ENCODE measurements at regions of chr6 and their contacts with region 1.

Region 1: DNA sequence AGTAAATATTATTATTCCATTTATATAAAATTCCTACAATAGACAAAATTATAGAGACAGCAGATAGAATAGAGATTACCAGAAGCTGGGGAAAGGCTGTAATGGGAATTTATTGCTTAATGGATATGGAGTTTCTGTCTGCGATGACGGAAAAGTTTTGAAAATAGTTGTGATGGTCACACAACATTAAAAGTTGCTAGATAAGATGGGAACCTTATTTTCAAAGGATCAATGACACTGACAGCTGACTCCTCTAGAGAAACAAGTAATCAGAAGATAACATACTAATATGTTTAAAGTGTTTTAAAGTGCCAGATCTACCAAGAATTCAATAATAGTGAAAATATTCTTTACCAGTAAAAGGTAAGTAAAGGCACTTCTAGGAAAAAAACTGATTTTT is 236.3 kb downstream of the HIVEP2 start:
- DNase-seq: no peak
- H3K4me3 Mint-ChIP-seq: no peak overlapping the region
- H3K27ac Mint-ChIP-seq: no peak overlapping the region
- H3K4me1 Mint-ChIP-seq: peaks cover 19% of the 10 kb centered on the region
- H3K27me3 Mint-ChIP-seq: no peaks in the 10 kb centered on the region

Region 2: GRCh38 chr6:142518115-142518514 is 190.5 kb before region 1 on chr6:
- CTCF ChIA-PET with region 1: no interaction called
- intact Hi-C with region 1: no loop called
- DNase-seq: no peak
- H3K4me3 Mint-ChIP-seq: no peak overlapping the region
- H3K27ac Mint-ChIP-seq: no peak overlapping the region
- H3K4me1 Mint-ChIP-seq: peaks cover 3% of the 10 kb centered on the region
- H3K27me3 Mint-ChIP-seq: no peaks in the 10 kb centered on the region

Region 3: DNA sequence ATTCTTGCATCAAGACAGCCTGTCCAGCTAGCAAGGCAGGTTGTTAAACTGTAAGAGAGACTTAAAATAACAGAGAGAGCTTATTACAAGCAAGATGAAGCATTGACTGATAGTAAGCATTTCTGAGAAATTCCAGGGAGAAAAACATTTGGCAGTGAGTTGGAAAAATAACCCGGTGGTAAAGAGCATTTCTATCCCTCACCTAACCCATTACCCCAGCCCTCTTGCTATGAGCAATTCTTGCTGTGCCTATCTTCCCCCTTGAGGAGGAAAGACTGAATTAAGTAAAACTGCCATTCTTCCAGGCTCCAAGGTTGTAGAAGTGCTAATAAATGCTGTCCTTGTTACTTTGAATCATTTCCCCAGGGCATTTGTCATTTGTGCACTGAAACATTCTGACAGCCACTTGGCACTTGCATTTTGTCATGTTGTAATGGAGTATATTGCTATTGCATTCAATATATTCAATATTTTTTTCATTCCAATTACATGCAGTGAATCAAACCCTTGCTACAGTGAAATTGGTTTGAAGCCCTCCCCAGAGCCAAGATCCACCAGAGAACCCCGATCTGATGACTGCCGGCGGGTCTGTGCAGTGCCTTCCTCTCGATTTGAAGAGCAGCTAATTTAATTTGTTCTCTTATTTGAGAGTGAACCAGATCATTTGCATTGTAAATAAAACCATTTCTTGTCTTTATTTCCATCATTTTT is 54.8 kb before region 1 on chr6:
- CTCF ChIA-PET with region 1: no interaction called
- intact Hi-C with region 1: no loop called
- DNase-seq: no peak
- H3K4me3 Mint-ChIP-seq: no peak overlapping the region
- H3K27ac Mint-ChIP-seq: no peak overlapping the region
- H3K4me1 Mint-ChIP-seq: no peaks in the 10 kb centered on the region
- H3K27me3 Mint-ChIP-seq: no peaks in the 10 kb centered on the region

Region 4: GRCh38 chr6:142737368-142738034 is 28.9 kb after region 1 on chr6:
- CTCF ChIA-PET with region 1: no interaction called
- intact Hi-C with region 1: loop called (anchors 1 kb)
- DNase-seq: no peak
- H3K4me3 Mint-ChIP-seq: no peak overlapping the region
- H3K27ac Mint-ChIP-seq: no peak overlapping the region
- H3K4me1 Mint-ChIP-seq: peaks cover 6% of the 10 kb centered on the region
- H3K27me3 Mint-ChIP-seq: no peaks in the 10 kb centered on the region

Measured in activated naive CD4-positive, alpha-beta T cell treated with anti-CD3 and anti-CD28 coated beads for 36 hours (primary cell).